ENCODE measurements at regions of chr7 and their contacts with region 1.

Region 1: DNA sequence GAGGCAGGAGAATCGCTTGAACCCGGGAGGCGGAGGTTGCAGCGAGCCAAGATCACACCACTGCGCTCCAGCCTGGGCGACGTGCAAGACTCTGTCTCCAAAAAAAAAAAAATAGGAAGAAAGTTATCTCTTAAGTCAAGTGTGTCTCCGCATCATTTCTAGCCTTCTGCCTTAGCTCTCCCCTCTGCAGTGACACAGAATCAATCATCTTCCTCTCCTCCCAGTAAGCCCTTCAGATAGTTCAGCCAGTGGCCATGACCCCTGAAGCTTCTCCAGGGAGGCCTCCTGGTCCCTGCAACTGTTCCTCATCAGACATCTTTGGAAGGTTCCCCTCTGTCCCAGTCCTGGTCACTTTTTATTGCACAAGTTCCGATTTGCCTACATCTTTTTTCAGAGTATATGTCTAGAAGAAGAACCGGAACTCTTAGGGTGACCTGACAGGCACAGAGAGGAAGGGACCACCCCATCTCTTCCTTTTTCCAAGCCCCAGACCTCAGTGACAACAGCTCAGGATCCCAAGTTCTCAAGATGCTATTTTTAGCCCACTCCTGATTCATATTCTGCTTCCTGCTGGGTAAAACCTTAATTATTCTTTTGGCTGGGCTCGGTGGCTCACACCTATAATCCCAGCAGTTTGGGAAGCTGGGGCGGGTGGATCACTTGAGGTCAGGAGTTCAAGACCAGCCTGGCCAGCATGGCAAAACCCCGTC is 6.6 kb upstream of the RHBDD2 start:
- DNase-seq: no peak
- ATAC-seq: no peak
- H3K4me3 ChIP-seq: no peak overlapping the region
- H3K4me3 Mint-ChIP-seq: no peak overlapping the region
- H3K27ac ChIP-seq: no peak overlapping the region
- H3K27ac Mint-ChIP-seq: no peak overlapping the region
- H3K4me1 ChIP-seq: no peaks in the 10 kb centered on the region
- H3K4me1 Mint-ChIP-seq: no peaks in the 10 kb centered on the region
- H3K27me3 ChIP-seq: no peaks in the 10 kb centered on the region
- H3K27me3 Mint-ChIP-seq: no peaks in the 10 kb centered on the region
- CTCF ChIP-seq: no peak

Region 2: DNA sequence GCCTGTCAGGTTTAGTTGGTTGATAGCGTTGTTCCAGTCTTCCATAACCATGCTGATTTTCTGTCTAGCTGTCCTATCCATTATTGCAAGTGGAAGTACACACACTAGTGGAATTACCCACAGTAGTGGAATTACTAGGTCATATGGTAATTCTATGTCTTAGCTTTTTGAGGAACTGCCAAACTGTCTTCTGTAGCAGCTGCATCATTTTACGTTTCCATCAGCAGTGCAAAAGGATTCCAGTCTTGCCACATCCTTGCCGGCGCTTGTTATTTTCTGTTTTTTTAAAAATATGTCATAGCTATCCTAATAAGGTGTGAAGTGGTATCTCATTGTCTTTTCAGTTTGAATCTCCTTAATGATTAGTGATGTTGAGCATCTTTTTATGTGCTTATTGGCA is 10.6 kb before region 1 on chr7:
- CTCF ChIA-PET with region 1: no interaction called
- POLR2A ChIA-PET with region 1: no interaction called
- intact Hi-C with region 1: no loop called
- DNase-seq: peak in 2 of 14 experiments; percentile 51 to 63
- ATAC-seq: no peak
- H3K4me3 ChIP-seq: no peak overlapping the region
- H3K4me3 Mint-ChIP-seq: no peak overlapping the region
- H3K27ac ChIP-seq: no peak overlapping the region
- H3K27ac Mint-ChIP-seq: no peak overlapping the region
- H3K4me1 ChIP-seq: peaks cover 5% of the 10 kb centered on the region
- H3K4me1 Mint-ChIP-seq: no peaks in the 10 kb centered on the region
- H3K27me3 ChIP-seq: no peaks in the 10 kb centered on the region
- H3K27me3 Mint-ChIP-seq: peaks cover 7% of the 10 kb centered on the region
- CTCF ChIP-seq: no peak

Region 3: GRCh38 chr7:76262683-76263402 is 390.6 kb after region 1 on chr7:
- CTCF ChIA-PET with region 1: no interaction called
- POLR2A ChIA-PET with region 1: no interaction called
- intact Hi-C with region 1: loop called (anchors 5 kb)
- DNase-seq: peak in 4 of 14 experiments; percentile 36 to 60 (median 48)
- ATAC-seq: peak; percentile 30
- H3K4me3 ChIP-seq: no peak overlapping the region
- H3K4me3 Mint-ChIP-seq: no peak overlapping the region
- H3K27ac ChIP-seq: no peak overlapping the region
- H3K27ac Mint-ChIP-seq: no peak overlapping the region
- H3K4me1 ChIP-seq: peaks cover 12% of the 10 kb centered on the region
- H3K4me1 Mint-ChIP-seq: peaks cover 1% of the 10 kb centered on the region
- H3K27me3 ChIP-seq: peaks cover 27 to 36% of the 10 kb centered on the region in 2 experiments
- H3K27me3 Mint-ChIP-seq: peaks cover 58% of the 10 kb centered on the region
- CTCF ChIP-seq: peak; percentile 47